ENCODE measurements at regions of chr16 and their contacts with region 1.

Region 1: GRCh38 chr16:47262938-47263337 is 119.2 kb upstream of the NETO2 start:
- DNase-seq: no peak
- H3K4me3 ChIP-seq: no peak overlapping the region
- CTCF ChIP-seq: no peak

Region 2: GRCh38 chr16:47250983-47251382 is 12.0 kb before region 1 on chr16:
- CTCF ChIA-PET with region 1: interaction called, 10 read pairs
- POLR2A ChIA-PET with region 1: no interaction called
- DNase-seq: no peak
- H3K4me3 ChIP-seq: no peak overlapping the region
- CTCF ChIP-seq: no peak